Gastrocnemius medialis (tissue), 4 donors: ENCODE measurements at regions of chr3 and their contacts with region 1.

Region 1: DNA sequence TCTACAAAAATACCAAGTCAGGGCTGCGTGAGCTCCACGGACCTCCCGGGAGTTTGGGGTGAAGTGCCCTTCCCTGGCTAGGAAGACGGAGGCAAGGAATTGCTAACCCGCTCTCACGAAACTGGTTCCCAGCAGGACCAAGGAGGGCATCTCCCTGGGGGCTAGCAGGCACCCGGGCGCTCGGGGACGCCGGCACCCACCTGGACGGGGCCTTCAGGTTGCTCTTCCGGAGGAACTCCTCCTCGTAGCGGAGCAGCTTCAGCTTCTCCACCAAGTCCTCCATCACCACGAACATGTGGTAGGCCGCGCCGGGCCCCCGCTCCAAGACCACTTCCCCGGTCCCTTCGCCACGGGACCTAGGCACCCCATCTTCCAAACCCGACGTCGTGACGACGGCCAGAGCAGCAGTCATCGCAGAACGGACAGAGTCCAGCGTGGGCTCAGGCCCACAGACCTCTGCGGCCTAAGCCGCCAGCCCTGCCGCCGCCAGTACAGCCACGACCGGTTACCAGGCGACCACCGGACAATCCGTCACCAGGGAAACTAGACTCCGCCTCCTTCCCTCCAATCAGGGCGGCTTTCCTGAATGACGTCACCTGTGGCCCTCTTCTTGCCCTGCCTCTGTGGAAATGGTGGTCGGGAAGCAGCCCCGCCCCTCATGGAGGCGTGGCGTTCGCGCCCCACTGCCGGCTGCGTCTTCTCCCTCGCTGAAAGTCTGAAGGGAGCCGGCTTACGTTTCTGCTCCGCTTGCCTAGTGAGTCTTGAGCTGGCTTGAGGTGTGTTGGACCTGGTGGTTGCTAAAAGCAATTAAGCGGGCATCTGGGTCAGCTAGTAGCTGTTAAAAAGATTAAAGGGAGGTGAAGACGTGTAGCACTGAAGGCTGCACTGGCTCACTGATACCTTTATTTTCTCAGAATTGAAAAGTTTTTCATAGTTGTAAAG is at the start of gene IFT57:
- DNase-seq: peak; percentile 94 to 96
- ATAC-seq: peak; percentile 97 to 99
- H3K4me3 ChIP-seq: peak within 1 kb of the TSS; percentile 85 to 94 (median 89)
- H3K27ac ChIP-seq: peak within 1 kb of the TSS; percentile 68 to 71 (median 70)
- H3K4me1 ChIP-seq: peaks cover 5 to 16% of the 10 kb centered on the region in 2 donors
- H3K27me3 ChIP-seq: no peaks in the 10 kb centered on the region
- CTCF ChIP-seq: no peak
- POLR2A ChIP-seq: peak; percentile 15 to 46
- total RNA-seq, gene IFT57: 7.2 to 18.5 (median 10.7) TPM

Region 2: GRCh38 chr3:107206141-107206540 is 1016.0 kb before region 1 on chr3:
- in situ Hi-C with region 1: no loop called
- intact Hi-C with region 1: loop called (anchors 5 kb)
- DNase-seq: no peak
- ATAC-seq: peak in 1 of 2 donors; percentile 40
- H3K4me3 ChIP-seq: no peak overlapping the region
- H3K27ac ChIP-seq: peak overlapping the region in 2 of 4 donors; percentile 69 to 80
- H3K4me1 ChIP-seq: peaks cover 30 to 35% of the 10 kb centered on the region in 2 donors
- H3K27me3 ChIP-seq: no peaks in the 10 kb centered on the region
- CTCF ChIP-seq: peak in 4 of 5 experiments; percentile 40 to 66 (median 46)
- POLR2A ChIP-seq: no peak

Region 3: DNA sequence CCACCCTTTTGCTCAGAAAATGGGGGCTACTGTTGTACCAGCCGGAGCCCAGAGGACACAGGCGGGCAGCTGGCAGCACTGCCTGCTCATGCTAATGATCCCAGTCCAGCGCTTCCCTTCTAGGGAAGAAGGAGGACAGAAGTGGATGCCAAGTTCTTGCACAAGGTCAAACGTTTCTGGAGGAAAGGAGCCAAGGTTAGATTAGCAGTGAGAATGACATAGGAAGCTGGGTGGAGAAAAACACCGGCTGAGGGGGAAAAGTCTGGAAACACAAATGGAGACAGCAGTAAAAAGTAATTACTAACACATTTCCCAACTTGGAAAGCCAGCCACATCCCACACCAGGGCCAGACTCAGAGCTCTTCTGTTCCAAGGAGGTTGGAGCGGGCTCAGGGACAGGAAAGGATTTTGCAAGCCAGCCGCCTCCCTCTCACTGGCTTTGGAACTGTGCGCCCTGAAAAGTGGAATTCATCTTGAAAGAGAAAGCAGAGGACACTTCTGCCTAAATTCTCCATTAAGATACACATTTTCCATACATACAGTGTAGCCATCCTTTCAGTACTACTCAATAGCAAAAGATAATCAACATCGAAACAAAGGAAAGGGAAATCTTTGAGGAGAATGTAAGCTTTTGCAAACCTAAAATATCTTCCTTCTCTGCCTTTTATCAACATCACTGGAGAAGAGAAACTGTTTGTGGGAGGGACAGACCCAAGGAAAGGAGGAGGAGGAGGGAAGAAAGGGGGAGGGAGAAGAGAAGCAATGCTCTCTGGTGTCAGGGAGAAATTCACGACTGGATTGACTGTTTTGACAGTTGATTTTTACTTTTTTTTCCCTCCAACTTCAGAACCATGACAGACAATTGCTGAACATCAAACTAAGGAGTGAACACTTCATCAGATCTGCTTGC is 264.9 kb before region 1 on chr3:
- in situ Hi-C with region 1: no loop called
- intact Hi-C with region 1: loop called (anchors 10 kb)
- DNase-seq: peak; percentile 58 to 79
- ATAC-seq: peak; percentile 96 to 97
- H3K4me3 ChIP-seq: peak overlapping the region; percentile 17 to 46 (median 26)
- H3K27ac ChIP-seq: peak overlapping the region; percentile 62 to 75 (median 68)
- H3K4me1 ChIP-seq: peaks cover 10 to 19% of the 10 kb centered on the region in 2 donors
- H3K27me3 ChIP-seq: no peaks in the 10 kb centered on the region
- CTCF ChIP-seq: no peak
- POLR2A ChIP-seq: peak in 1 of 2 donors; percentile 8

Region 4: GRCh38 chr3:108130701-108131474 is 91.3 kb before region 1 on chr3:
- in situ Hi-C with region 1: no loop called
- intact Hi-C with region 1: loop called (anchors 2 kb)
- DNase-seq: no peak
- ATAC-seq: peak; percentile 91 to 96
- H3K4me3 ChIP-seq: no peak overlapping the region
- H3K27ac ChIP-seq: peak overlapping the region in 3 of 4 donors; percentile 22 to 69 (median 58)
- H3K4me1 ChIP-seq: peaks cover 5 to 13% of the 10 kb centered on the region in 2 donors
- H3K27me3 ChIP-seq: no peaks in the 10 kb centered on the region
- CTCF ChIP-seq: no peak
- POLR2A ChIP-seq: no peak